ENCODE measurements at regions of chr10 and their contacts with region 1.

Region 1: DNA sequence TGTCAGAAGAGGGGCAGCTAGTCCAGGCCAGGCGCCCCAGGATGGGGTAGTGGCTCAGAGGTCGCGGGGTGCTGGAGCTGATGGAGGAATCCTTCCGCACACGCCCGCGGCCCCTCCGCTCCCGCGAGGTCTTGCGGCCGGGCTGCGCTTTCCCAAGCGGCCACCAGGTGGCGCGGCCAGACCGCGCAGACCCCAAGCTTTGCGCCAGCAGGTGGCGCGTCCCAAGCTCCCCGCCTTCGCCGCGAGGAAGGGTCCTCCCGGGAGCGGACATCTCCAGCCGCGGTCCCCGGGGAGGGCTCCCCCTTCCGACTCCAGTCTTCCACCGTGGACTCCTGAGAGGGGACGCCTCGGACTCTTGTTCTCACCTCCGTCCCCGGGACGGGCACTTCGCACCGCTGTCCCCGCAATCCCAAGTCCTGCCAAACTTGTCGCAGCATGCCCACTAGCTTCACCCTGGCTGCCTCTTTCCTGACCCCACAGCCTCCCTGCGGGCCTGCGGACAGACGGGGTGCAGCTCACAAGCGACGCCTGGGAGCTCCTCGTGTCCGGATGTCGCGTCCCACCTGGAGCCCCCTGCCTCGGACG is 19.4 kb downstream of the KCNK18 start:
- DNase-seq: peak; percentile 72 to 85 (median 82)
- ATAC-seq: peak; percentile 95
- H3K4me3 ChIP-seq: peak overlapping the region; percentile 26
- H3K27ac ChIP-seq: no peak overlapping the region
- H3K4me1 ChIP-seq: peaks cover 0 to 19% of the 10 kb centered on the region in 2 experiments; a peak in 3 of 5 replicates
- H3K27me3 ChIP-seq: peaks cover 5 to 33% of the 10 kb centered on the region in 2 experiments; a peak in 4 of 5 replicates
- CTCF ChIP-seq: peak; percentile 94 to 100 (median 100)
- EP300 ChIP-seq: no peak
- POLR2A ChIP-seq: no peak
- RAD21 ChIP-seq: peak; percentile 92 to 96

Region 2: GRCh38 chr10:117320050-117320665 is 103.5 kb after region 1 on chr10:
- CTCF ChIA-PET with region 1: interaction called, 57 read pairs
- POLR2A ChIA-PET with region 1: no interaction called
- in situ Hi-C with region 1: no loop called
- intact Hi-C with region 1: loop called (anchors 2 kb)
- DNase-seq: peak; percentile 16 to 28 (median 24)
- ATAC-seq: peak; percentile 74; the same call in 2 of the 3 replicates
- H3K4me3 ChIP-seq: no peak overlapping the region
- H3K27ac ChIP-seq: no peak overlapping the region
- H3K4me1 ChIP-seq: no peaks in the 10 kb centered on the region
- H3K27me3 ChIP-seq: no peaks in the 10 kb centered on the region
- CTCF ChIP-seq: peak; percentile 39 to 69 (median 67); a peak in 4 of 6 replicates
- EP300 ChIP-seq: no peak
- POLR2A ChIP-seq: no peak
- RAD21 ChIP-seq: peak; percentile 74 to 80

Region 3: GRCh38 chr10:117449636-117450035 is 232.9 kb after region 1 on chr10:
- CTCF ChIA-PET with region 1: interaction called, 4 read pairs
- POLR2A ChIA-PET with region 1: no interaction called
- in situ Hi-C with region 1: no loop called
- intact Hi-C with region 1: loop called (anchors 2 kb)
- DNase-seq: peak; percentile 28 to 53 (median 36)
- ATAC-seq: peak; percentile 82
- H3K4me3 ChIP-seq: no peak overlapping the region
- H3K27ac ChIP-seq: no peak overlapping the region
- H3K4me1 ChIP-seq: no peaks in the 10 kb centered on the region
- H3K27me3 ChIP-seq: no peaks in the 10 kb centered on the region
- CTCF ChIP-seq: peak; percentile 62 to 72 (median 67)
- EP300 ChIP-seq: no peak
- POLR2A ChIP-seq: no peak
- RAD21 ChIP-seq: peak in 1 of 2 experiments; percentile 63; a peak in 2 of 4 replicates